Activated naive CD4-positive, alpha-beta T cell treated with anti-CD3 and anti-CD28 coated beads, Interleukin-2, amount 10 ng/mL, durations not matched to agents 7 days and 5 days (primary cell): ENCODE measurements at regions of chr22 and their contacts with region 1.

Region 1: GRCh38 chr22:41576877-41577276 is 12.8 kb downstream of the PMM1 start:
- DNase-seq: peak; percentile 69
- H3K4me3 Mint-ChIP-seq: no peak overlapping the region
- H3K27ac Mint-ChIP-seq: no peak overlapping the region
- H3K4me1 Mint-ChIP-seq: peaks cover 11% of the 10 kb centered on the region
- H3K27me3 Mint-ChIP-seq: no peaks in the 10 kb centered on the region

Region 2: GRCh38 chr22:41589391-41590241 is 12.7 kb after region 1 on chr22 and contains the start of gene PMM1:
- CTCF ChIA-PET with region 1: interaction called, 10 read pairs
- DNase-seq: peak; percentile 100
- H3K4me3 Mint-ChIP-seq: peak within 1 kb of the TSS; percentile 90
- H3K27ac Mint-ChIP-seq: peak within 1 kb of the TSS; percentile 87
- H3K4me1 Mint-ChIP-seq: peaks cover 29% of the 10 kb centered on the region
- H3K27me3 Mint-ChIP-seq: no peaks in the 10 kb centered on the region